ENCODE measurements at regions of chr1 and their contacts with region 1.

Region 1: DNA sequence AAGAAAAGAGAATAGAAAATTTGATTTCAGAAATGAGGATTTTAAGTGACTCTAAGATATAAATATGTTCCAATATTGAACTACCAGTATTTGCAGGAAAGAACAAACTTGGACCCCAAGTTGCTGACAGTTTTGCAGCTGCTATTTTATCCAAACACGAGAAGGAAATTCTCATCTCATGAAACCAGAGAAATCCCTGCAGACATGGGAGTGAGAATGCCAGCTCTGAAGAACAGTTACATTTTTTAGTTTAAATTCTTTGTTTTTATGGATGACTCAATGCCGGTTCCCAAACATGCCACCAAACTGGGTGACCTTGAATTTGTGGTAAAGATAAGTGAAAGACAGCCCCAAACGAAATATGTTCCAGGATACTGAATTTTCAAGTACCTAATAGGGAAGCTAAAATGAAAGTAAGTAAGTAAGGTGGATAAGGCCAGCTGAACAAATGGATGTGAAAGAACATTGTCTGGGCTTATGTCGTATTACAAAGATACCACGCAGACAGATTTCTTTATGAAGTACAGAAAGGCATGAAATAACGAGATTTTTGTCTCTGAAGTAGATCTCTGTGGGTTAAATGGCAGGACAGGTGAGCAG is 19.9 kb downstream of the TLR5 start:
- DNase-seq: no peak
- H3K4me3 ChIP-seq: peak overlapping the region; percentile 22 to 41 (median 37)
- H3K27ac ChIP-seq: no peak overlapping the region
- H3K4me1 ChIP-seq: no peaks in the 10 kb centered on the region
- H3K27me3 ChIP-seq: no peaks in the 10 kb centered on the region
- CTCF ChIP-seq: no peak

Region 2: DNA sequence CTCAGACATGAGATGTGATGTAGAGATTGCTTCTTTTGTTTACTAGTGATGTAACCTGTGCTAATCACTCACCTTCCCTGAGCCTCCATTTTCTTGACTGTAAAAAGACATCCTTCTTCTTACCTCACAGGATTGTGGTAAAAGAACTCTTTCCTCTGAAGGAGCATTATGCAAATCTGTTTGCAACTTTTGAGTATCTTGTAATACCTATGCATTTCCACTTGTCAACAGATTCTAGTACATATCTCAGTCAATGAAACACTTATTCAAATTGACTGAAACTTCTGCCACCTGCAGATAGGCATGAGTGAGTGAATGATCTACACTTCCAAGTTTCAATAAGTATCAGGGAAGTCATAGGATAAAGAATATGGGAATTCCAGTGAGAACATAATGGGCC is 749.9 kb before region 1 on chr1:
- CTCF ChIA-PET with region 1: no interaction called
- dilution Hi-C with region 1: no loop called
- in situ Hi-C with region 1: no loop called
- intact Hi-C with region 1: no loop called
- DNase-seq: no peak
- H3K4me3 ChIP-seq: no peak overlapping the region
- H3K27ac ChIP-seq: no peak overlapping the region
- H3K4me1 ChIP-seq: peaks cover 30% of the 10 kb centered on the region
- H3K27me3 ChIP-seq: no peaks in the 10 kb centered on the region
- CTCF ChIP-seq: no peak

Region 3: DNA sequence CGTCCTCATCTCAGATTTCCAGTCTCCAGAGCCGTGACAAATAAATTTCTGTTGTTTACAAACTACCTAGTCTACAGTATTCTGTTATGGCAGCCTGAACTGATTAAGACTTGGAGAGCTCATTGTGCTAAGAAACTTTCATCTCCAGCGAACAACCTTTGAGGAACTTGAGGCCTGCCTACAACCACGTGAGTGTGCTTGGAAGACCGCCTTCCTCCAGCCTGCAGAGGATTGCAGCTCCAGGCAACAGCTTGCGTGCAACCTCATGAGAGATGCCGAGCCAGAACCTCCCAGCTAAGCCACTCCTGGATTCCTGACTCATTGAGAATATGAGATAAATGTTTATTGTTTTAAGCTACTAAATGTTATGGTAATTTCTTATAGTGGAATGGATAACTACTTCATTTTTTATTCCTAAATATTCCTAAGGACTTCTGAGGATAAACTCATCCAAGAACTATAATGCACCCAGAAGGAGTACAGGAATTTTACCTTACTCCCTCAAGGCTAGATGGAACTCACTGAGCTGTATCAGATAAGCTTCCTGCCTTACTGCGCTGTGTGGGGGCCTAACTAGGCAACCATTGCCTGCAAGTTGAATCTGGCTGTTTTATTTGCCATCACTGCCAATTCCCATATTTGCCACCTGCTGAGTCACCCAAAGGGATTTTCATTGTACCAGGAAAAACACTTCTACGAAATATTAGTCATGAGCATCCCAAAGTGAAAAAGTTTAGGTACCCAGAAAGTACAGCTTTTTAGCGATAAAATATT is 368.6 kb before region 1 on chr1:
- CTCF ChIA-PET with region 1: interaction called, 10 read pairs
- dilution Hi-C with region 1: no loop called
- in situ Hi-C with region 1: no loop called
- intact Hi-C with region 1: no loop called
- DNase-seq: peak; percentile 85
- H3K4me3 ChIP-seq: no peak overlapping the region
- H3K27ac ChIP-seq: peak overlapping the region; percentile 81
- H3K4me1 ChIP-seq: peaks cover 16% of the 10 kb centered on the region
- H3K27me3 ChIP-seq: no peaks in the 10 kb centered on the region
- CTCF ChIP-seq: no peak

Region 4: GRCh38 chr1:223319905-223320600 is 196.9 kb after region 1 on chr1:
- CTCF ChIA-PET with region 1: no interaction called
- dilution Hi-C with region 1: no loop called
- in situ Hi-C with region 1: no loop called
- intact Hi-C with region 1: no loop called
- DNase-seq: no peak
- H3K4me3 ChIP-seq: no peak overlapping the region
- H3K27ac ChIP-seq: no peak overlapping the region
- H3K4me1 ChIP-seq: peaks cover 5% of the 10 kb centered on the region
- H3K27me3 ChIP-seq: no peaks in the 10 kb centered on the region
- CTCF ChIP-seq: no peak